ENCODE measurements at regions of chr10 and their contacts with region 1.

Region 1: GRCh38 chr10:71771821-71772617 is 1.3 kb downstream of the VSIR start:
- DNase-seq: peak; percentile 85
- ATAC-seq: peak; percentile 68

Region 2: GRCh38 chr10:71727738-71728737 is 44.0 kb before region 1 on chr10:
- intact Hi-C with region 1: loop called (anchors 5 kb)
- DNase-seq: peak; percentile 83
- ATAC-seq: peak; percentile 83